Right lobe of liver (tissue), 6 donors: ENCODE measurements at regions of chr7 and their contacts with region 1.

Region 1: DNA sequence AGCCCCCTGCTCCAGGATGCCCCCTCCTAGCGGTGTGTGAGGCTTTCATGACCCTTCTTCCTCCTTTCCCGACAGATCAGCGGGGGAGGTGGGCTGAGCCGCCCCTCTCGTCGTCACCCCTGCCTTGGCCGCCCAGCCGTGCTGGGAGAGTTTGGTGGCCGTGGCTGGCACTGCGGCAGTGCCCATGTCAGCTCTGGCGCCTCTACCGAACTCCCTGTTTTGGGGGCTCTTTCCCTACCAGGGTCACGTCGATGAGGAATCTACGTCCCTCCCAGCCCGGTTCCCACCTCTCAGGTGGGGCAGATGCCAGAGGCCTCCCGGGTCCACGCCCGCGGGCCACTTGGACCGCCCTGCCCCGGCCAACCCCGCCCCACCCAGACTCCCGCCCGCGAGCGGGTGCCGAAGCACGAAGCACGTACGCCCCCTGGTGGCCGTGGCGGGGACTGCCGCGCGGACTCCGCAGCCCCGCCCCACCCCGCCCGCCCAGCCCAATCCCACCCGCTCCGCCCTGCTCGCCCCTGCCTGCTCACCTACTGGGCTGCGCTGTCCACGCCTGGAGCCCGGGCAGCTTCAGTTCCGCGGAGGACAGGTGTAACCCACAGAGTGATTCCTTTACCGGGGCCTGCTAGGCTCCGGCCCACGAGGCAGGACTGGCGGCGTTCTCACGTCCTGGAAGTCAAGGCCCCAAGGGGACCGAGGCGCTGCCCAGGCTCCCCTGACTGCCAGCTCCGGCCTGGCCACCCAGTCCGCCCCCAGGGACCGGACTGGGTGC is 127.1 kb downstream of the UBE2H start:
- DNase-seq: peak; percentile 91 to 94 (median 92)
- ATAC-seq: peak; percentile 82 to 94 (median 88)
- H3K4me3 ChIP-seq: peak overlapping the region; percentile 44 to 68 (median 55)
- H3K27ac ChIP-seq: no peak overlapping the region
- H3K4me1 ChIP-seq: peaks cover 0 to 17% (median 3%) of the 10 kb centered on the region in 4 donors
- H3K27me3 ChIP-seq: no peaks in the 10 kb centered on the region
- CTCF ChIP-seq: peak; percentile 54 to 97 (median 92)
- POLR2A ChIP-seq: no peak

Region 2: DNA sequence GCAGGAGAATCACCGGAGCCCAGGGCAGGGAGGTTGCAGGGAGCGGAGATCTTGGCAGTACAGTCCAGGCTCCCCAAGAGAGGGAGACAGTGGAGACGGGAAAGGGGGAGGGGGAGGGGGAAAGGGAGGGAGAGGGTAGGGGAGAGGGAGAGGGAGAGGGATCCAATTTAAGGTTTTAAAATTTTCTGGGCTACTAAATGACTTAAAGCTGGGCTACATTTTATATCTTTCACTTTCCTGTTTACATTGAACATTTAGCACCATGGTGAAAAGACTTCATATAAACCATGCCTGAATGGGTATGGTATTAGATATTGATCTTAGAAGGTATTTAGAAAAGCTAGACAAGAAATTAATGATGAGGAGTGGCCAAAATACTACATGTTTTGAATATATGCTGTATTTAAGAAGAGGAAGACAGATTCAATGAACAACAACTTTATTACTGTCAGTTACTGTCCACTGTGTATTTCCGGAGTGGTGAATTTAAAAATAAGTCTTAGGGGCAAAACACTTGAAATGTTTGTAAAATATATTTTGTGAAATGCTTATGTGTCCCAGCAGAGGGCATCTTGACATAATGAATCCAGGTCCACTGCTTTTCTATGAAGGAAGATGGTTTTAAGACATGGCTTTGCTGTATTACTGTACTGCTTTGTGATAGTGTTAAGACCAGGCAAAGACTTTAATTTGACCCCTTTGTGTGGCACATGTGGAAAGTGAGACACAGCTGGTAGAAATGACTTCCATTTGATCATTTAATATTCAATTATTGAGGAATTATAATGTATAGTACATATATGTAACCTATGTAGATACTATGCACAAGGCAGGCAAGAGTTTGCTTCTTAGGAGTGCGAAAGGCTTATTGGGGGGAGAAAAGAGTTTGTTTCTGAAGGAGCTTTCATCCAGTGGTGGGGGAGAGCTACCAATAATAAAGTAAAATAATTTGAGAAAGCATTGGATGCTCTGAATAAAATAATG is 161.4 kb before region 1 on chr7:
- intact Hi-C with region 1: loop called in 1 of 2 experiments (anchors 10 kb)
- DNase-seq: no peak
- ATAC-seq: peak; percentile 47 to 71 (median 56)
- H3K4me3 ChIP-seq: no peak overlapping the region
- H3K27ac ChIP-seq: no peak overlapping the region
- H3K4me1 ChIP-seq: no peaks in the 10 kb centered on the region
- H3K27me3 ChIP-seq: no peaks in the 10 kb centered on the region
- CTCF ChIP-seq: peak; percentile 35 to 52 (median 42)
- POLR2A ChIP-seq: no peak

Region 3: DNA sequence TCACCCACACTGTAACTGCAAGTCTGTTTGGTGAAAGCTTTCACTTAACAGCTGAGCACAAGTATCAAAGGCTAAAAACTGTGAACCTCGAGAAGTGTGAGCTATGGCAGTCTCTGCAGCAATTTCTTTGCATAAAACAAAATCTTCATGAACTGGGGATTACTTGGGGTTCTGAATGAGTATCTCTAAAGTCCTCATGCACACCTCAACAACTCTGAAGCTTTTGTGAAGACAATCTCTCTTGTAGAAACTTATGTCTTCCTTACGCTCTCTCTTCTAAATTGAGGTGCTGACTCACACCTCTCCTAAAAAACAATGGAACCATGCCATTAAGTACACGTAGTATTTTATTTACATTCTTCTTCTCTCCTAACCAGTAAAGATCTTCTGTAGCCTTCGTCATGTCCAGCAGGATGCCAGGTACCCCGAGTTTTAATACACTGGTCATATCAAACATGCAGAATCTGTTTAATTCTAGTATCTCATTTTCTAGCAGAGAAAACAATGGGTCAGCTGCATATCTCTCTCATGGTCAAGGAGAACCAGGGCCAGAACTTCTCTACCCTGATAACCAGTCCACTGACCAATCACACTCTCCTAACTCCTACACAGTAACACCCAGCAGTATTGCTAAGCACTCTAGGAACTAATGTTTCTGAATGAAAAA is 50.2 kb after region 1 on chr7:
- intact Hi-C with region 1: no loop called
- DNase-seq: no peak
- ATAC-seq: peak in 1 of 4 donors; percentile 11
- H3K4me3 ChIP-seq: no peak overlapping the region
- H3K27ac ChIP-seq: peak overlapping the region in 1 of 3 donors; percentile 12
- H3K4me1 ChIP-seq: peaks cover 0 to 42% (median 16%) of the 10 kb centered on the region in 4 donors
- H3K27me3 ChIP-seq: no peaks in the 10 kb centered on the region
- CTCF ChIP-seq: no peak
- POLR2A ChIP-seq: no peak

Region 4: DNA sequence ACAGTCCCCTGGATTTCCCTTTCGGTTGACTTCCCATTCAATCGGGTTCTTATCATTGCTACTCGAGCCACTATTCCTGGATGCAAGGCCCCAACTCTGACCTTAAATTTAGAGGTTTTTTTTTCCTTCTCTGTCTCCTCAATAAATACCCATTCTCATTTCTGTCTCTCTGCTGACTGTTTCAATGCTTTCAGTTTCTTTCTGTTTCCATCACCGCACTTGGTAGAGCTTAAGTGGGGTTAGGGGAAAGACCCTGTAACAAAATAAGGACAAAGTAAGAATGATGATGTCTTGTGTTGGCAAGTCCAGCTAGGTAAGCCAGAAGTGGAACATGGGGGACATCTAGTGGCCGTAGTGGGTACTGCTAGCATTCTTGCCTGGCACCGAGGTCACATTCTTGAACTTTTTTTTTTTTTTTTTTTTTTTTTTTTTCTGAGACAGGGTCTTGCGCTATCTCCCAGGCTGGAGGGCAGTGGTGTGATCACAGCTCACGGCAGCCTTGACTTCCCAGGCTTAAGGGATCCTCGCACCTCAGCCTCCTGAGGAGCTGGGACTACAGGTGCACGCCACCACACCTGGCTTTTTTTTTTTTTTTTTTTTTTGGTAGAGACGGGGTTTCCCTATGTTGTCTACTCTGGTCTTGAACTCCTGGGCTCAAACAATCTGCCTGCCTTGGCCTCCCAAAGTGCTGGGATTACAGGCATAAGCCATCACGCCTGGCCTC is 185.2 kb after region 1 on chr7:
- intact Hi-C with region 1: loop called in 1 of 2 experiments (anchors 10 kb)
- DNase-seq: peak; percentile 59 to 73 (median 60)
- ATAC-seq: peak; percentile 86 to 97 (median 90)
- H3K4me3 ChIP-seq: no peak overlapping the region
- H3K27ac ChIP-seq: no peak overlapping the region
- H3K4me1 ChIP-seq: no peaks in the 10 kb centered on the region
- H3K27me3 ChIP-seq: no peaks in the 10 kb centered on the region
- CTCF ChIP-seq: peak; percentile 82 to 92 (median 87)
- POLR2A ChIP-seq: no peak